Posterior vena cava (tissue), 2 donors: ENCODE measurements at regions of chr11 and their contacts with region 1.

Region 1: DNA sequence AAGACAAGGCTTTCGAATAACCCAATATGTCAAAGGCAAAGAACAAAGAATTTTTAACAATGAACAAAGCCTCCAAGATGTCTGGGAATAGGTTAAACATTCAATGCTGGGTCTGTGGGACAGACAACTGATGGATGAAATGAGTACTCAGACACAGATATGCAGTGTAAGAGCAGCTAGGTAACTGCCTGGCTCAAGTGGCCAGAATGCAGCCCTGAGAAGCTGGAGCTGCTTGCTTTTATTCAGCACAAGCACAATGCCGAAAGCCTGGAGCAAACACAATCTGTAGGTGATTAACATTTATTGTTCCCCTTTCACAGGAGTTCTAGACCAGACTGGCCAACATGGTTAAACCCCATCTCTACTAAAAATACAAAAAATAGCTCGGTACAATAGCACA is 24.0 kb downstream of the GLYAT start:
- DNase-seq: no peak

Region 2: DNA sequence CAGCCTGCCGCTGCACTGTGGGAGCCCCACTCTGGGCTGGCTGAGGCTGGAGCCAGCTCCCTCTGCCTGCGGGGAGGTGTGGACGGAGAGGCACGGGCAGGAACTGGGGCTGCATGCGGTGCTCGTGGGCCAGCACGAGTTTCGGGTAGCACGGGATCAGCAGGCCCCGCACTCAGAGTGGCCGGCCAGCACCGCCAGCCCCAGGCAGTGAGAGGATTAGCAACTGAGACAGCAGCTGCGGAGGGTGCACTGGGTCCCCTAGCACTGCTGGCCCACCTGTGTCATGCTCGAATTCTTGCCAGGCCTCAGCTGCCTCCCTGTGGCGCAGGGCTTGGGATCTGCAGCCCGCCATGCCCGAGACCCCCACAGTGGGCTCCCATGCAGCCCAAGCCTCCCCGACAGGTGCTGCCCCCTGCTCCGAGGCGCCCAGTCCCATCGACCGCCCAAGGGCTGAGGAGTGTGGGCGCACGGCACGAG is 175.9 kb before region 1 on chr11:
- intact Hi-C with region 1: no loop called
- DNase-seq: no peak

Region 3: DNA sequence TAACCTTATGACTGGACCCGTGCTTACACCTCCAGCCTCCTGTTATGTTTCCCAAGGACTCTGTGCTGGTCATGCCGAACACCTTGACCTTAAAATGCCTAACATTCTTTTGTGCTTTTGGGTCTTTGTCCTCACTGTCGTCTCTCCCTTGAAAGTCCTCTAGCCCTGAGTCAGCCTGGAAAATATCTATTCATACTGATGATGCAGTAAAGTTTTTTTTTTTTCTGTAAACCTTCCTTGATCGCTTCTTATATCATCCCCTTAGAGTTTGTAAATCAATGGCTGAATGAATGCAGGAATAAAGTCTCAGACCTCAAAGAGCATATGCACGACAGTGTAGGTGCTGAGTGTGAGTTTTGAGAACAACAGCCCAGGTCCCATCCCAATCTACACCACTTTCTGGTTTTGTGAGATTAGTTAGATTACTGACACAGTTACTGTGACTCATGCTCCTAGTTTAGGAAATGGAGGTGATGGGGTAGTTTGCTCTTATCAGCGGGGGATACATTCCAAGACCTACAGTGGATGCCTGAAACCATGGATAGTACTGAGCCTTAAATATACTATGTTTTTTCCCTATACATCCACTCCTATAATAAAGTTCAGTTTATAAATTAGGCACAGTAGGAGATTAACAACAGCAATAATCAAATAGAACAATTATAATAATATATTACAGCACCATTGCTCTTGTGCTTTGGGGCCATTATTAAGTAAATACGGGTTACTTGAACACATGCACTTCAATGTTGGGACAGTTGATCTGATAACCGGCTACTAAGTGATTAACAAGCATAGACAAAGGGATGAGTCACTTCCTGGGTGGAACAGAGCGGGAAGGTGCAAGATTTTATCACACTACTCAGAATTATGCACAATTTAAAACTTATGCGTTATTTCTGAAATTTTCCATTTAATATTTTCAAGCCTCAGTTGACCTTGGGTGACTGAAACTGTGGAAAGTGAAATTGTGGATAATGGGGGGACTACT is 1150.0 kb after region 1 on chr11:
- intact Hi-C with region 1: no loop called
- DNase-seq: no peak

Region 4: GRCh38 chr11:59981106-59981770 is 1273.5 kb after region 1 on chr11:
- intact Hi-C with region 1: loop called in 1 of 2 experiments (anchors 5 kb)
- DNase-seq: no peak